Breast epithelium (tissue), 4 donors: ENCODE measurements at regions of chrX and their contacts with region 1.

Region 1: DNA sequence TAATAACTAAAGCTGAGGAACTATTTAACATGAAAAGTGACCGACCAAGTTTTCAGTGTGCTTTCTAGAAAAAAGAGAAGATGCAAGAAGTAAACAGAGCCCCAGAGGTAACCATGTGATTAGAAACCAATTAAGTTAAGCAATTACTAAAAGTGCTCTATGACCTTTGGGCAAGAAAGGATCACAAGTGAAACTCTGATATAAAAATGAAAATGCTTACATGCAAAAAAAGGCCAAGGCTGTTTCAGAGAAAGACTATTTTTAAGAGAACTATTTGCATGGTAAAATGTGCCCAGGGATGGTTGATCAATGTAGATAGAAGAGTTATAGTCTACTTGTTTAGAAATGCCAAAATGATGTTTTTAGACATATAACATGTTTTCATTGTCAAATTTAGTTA is 22.0 kb downstream of the KLHL15 start:
- DNase-seq: no peak
- H3K4me3 ChIP-seq: no peak overlapping the region
- H3K27ac ChIP-seq: no peak overlapping the region
- H3K4me1 ChIP-seq: no peaks in the 10 kb centered on the region
- H3K27me3 ChIP-seq: peaks cover 0 to 1% of the 10 kb centered on the region in 2 donors
- CTCF ChIP-seq: no peak
- POLR2A ChIP-seq: no peak

Region 2: DNA sequence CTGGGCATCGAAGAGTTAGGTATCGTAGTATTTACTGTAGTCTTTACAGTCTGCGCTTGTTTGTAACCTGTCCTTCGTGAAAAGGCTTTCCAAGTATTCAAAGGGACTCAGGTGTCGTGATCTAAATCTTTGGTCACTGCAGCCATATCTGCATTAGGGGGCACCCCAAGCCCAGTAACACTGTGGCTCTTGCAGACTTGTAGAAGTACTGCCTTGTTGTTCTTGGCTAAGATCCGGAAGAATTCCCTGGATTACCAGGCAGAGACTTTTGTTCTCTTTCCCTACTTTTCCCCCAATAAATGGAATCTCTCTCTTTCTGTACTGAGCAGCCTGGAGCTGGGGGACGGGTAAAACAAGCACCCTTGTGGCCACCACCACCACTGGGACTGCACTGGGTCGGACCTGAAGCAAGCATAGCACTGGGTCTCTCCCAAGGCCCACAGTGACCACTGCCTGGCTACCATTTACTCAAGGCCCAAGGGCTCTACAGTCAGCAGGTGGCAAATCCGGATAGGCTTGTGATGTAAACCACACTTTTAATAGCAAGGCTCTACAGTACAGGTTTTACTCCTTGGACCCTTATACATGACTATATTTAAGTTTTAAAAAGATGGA is 85.2 kb before region 1 on chrX:
- intact Hi-C with region 1: loop called (anchors 5 kb)
- DNase-seq: no peak
- H3K4me3 ChIP-seq: no peak overlapping the region
- H3K27ac ChIP-seq: no peak overlapping the region
- H3K4me1 ChIP-seq: no peaks in the 10 kb centered on the region
- H3K27me3 ChIP-seq: peaks cover 0 to 21% of the 10 kb centered on the region in 2 donors
- CTCF ChIP-seq: no peak
- POLR2A ChIP-seq: no peak

Region 3: GRCh38 chrX:24025741-24026403 is 20.8 kb after region 1 on chrX:
- intact Hi-C with region 1: no loop called
- DNase-seq: peak; percentile 26 to 51
- H3K4me3 ChIP-seq: peak overlapping the region; percentile 72 to 74 (median 74)
- H3K27ac ChIP-seq: peak overlapping the region; percentile 95 to 99
- H3K4me1 ChIP-seq: no peaks in the 10 kb centered on the region
- H3K27me3 ChIP-seq: peaks cover 0 to 30% of the 10 kb centered on the region in 2 donors
- CTCF ChIP-seq: no peak
- POLR2A ChIP-seq: no peak